ENCODE measurements at regions of chr6 and their contacts with region 1.

Region 1: GRCh38 chr6:111764238-111765175 is 108.7 kb downstream of the FYN start:
- DNase-seq: peak; percentile 29 to 86 (median 65)
- H3K4me3 ChIP-seq: peak overlapping the region; percentile 9
- H3K4me3 Mint-ChIP-seq: peak overlapping the region; percentile 70 to 87 (median 80)
- H3K27ac ChIP-seq: peak overlapping the region; percentile 58
- H3K27ac Mint-ChIP-seq: peak overlapping the region; percentile 95 to 100 (median 100)
- H3K4me1 ChIP-seq: peaks cover 97% of the 10 kb centered on the region
- H3K4me1 Mint-ChIP-seq: peaks cover 97 to 100% (median 100%) of the 10 kb centered on the region in 3 donors
- H3K27me3 ChIP-seq: no peaks in the 10 kb centered on the region
- H3K27me3 Mint-ChIP-seq: peaks cover 0 to 3% of the 10 kb centered on the region in 2 donors

Region 2: GRCh38 chr6:111445861-111446267 is 318.6 kb before region 1 on chr6:
- CTCF ChIA-PET with region 1: no interaction called
- POLR2A ChIA-PET with region 1: no interaction called
- DNase-seq: no peak
- H3K4me3 ChIP-seq: no peak overlapping the region
- H3K4me3 Mint-ChIP-seq: no peak overlapping the region
- H3K27ac ChIP-seq: no peak overlapping the region
- H3K27ac Mint-ChIP-seq: peak overlapping the region in 1 of 8 donors; percentile 12
- H3K4me1 ChIP-seq: no peaks in the 10 kb centered on the region
- H3K4me1 Mint-ChIP-seq: peaks cover 23 to 55% (median 48%) of the 10 kb centered on the region in 3 donors
- H3K27me3 ChIP-seq: no peaks in the 10 kb centered on the region
- H3K27me3 Mint-ChIP-seq: peaks cover 0 to 1% of the 10 kb centered on the region in 2 donors

Region 3: DNA sequence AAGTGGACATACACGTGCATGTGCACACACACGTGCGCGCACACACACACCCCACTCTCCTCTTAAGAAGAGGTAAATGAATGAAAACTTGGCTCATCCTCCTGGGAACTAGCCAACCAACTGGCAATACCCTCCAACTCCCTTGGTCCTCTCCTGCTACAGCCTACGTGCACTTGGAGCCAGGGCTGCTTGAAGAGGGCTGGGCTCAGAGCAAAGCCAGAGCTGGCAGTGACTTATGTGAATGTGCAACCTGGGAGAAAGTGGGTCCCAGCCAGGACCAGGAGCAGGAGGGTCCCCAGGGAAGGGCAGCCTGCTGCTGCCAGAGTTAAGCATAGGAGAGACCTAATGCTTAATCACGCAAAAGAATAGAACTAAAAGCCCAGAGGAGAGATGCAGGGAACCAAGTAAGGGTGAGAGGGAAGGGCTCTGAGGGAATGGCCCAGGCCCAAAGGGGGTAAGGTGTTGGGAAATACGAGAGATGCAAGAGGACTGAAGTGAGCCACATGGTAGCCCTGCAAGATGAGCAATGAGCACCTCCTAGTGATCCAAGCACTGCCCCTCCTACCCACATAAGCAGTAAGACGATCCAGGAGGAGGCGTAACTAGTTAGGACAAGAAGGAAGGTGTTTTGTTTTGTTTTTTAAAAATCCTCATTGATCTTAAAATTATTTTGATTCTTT is 183.5 kb before region 1 on chr6:
- CTCF ChIA-PET with region 1: no interaction called
- POLR2A ChIA-PET with region 1: no interaction called
- DNase-seq: no peak
- H3K4me3 ChIP-seq: no peak overlapping the region
- H3K4me3 Mint-ChIP-seq: no peak overlapping the region
- H3K27ac ChIP-seq: no peak overlapping the region
- H3K27ac Mint-ChIP-seq: peak overlapping the region in 2 of 8 donors; percentile 19 to 94
- H3K4me1 ChIP-seq: no peaks in the 10 kb centered on the region
- H3K4me1 Mint-ChIP-seq: peaks cover 12 to 29% (median 24%) of the 10 kb centered on the region in 3 donors
- H3K27me3 ChIP-seq: no peaks in the 10 kb centered on the region
- H3K27me3 Mint-ChIP-seq: no peaks in the 10 kb centered on the region

Region 4: DNA sequence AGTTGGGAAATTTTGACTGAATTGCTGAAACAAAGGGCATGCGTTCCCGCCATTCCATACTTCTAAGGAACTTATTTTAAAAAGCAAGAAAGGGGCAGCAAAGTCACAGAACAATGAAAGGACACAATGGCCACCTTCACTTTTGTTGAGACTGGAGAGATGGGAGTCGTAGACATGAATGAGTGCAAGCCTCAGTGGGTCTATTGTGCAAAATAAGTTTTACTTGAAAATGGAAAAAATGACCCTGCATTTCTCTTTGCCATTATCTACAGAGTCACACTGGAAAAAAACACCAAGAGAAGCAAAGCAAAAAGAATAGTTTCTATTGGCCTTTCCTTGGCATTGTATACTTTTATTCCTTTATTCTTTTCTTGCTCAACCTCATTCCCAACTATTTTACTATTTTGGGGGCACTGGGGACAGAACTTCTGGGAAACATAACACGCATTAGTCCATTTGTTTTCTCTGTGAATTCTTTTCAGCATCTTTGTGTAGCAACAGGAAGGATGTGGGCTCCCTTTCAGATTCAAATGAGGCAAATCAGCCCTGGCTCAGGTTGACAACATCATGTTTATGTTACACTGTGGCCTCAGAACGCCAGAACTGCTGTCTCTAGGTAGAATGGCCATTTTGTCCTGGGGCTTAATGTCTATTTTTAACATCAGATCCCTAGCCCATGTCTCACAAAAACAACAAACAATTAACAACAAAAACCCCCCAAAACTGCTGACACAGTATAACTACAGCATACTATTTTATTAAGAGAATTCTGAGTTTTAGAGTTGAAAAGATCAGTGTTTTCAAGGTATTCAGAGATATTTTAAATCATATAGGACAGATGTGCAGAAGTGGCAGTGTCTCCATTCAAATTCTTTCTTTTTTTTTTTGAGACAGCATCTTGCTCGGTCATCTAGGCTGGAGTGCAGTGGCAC is 13.5 kb before region 1 on chr6:
- CTCF ChIA-PET with region 1: interaction called, 19 read pairs
- POLR2A ChIA-PET with region 1: interaction called, 23 read pairs
- DNase-seq: peak; percentile 44 to 82 (median 81)
- H3K4me3 ChIP-seq: peak overlapping the region; percentile 31
- H3K4me3 Mint-ChIP-seq: peak overlapping the region; percentile 57 to 81 (median 76)
- H3K27ac ChIP-seq: peak overlapping the region; percentile 68
- H3K27ac Mint-ChIP-seq: peak overlapping the region; percentile 97 to 100 (median 100)
- H3K4me1 ChIP-seq: peaks cover 98% of the 10 kb centered on the region
- H3K4me1 Mint-ChIP-seq: peaks cover 94 to 100% (median 99%) of the 10 kb centered on the region in 3 donors
- H3K27me3 ChIP-seq: no peaks in the 10 kb centered on the region
- H3K27me3 Mint-ChIP-seq: no peaks in the 10 kb centered on the region

Region 5: DNA sequence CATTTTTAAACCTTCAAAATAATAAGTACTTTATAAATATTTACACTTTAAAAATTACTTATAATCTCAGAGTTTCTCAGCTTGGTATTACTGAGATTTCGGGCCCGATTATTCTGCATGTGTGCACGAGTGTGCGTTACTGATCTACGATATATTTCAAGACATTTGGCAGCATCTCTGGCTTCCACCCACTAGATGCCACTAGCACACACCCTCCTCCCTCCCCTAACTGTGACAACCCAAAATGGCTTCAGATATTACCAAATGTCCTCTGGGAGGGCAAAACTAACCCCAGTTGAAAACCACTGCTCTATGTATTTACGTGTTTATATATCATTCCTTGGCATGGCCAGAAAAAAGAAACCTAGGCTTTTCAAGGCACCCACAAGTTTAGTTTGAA is 12.8 kb after region 1 on chr6:
- CTCF ChIA-PET with region 1: interaction called, 30 read pairs
- POLR2A ChIA-PET with region 1: interaction called, 10 read pairs
- DNase-seq: peak in 3 of 5 donors; percentile 15 to 67 (median 48)
- H3K4me3 ChIP-seq: no peak overlapping the region
- H3K4me3 Mint-ChIP-seq: peak overlapping the region; percentile 10 to 81 (median 63)
- H3K27ac ChIP-seq: no peak overlapping the region
- H3K27ac Mint-ChIP-seq: peak overlapping the region; percentile 75 to 99 (median 86)
- H3K4me1 ChIP-seq: peaks cover 87% of the 10 kb centered on the region
- H3K4me1 Mint-ChIP-seq: peaks cover 87 to 96% (median 96%) of the 10 kb centered on the region in 3 donors
- H3K27me3 ChIP-seq: no peaks in the 10 kb centered on the region
- H3K27me3 Mint-ChIP-seq: no peaks in the 10 kb centered on the region

Region 6: GRCh38 chr6:111804627-111805235 is 40.2 kb after region 1 on chr6:
- CTCF ChIA-PET with region 1: interaction called, 10 read pairs
- POLR2A ChIA-PET with region 1: no interaction called
- DNase-seq: peak; percentile 59 to 88 (median 63)
- H3K4me3 ChIP-seq: no peak overlapping the region
- H3K4me3 Mint-ChIP-seq: peak overlapping the region; percentile 32 to 79 (median 66)
- H3K27ac ChIP-seq: peak overlapping the region; percentile 49
- H3K27ac Mint-ChIP-seq: peak overlapping the region; percentile 91 to 99 (median 96)
- H3K4me1 ChIP-seq: peaks cover 70% of the 10 kb centered on the region
- H3K4me1 Mint-ChIP-seq: peaks cover 85 to 99% (median 93%) of the 10 kb centered on the region in 3 donors
- H3K27me3 ChIP-seq: no peaks in the 10 kb centered on the region
- H3K27me3 Mint-ChIP-seq: peaks cover 0 to 2% of the 10 kb centered on the region in 2 donors

Region 7: GRCh38 chr6:111873178-111874024 is 108.9 kb after region 1 on chr6 and contains the start of gene FYN:
- CTCF ChIA-PET with region 1: interaction called, 6 read pairs
- POLR2A ChIA-PET with region 1: interaction called, 10 read pairs
- DNase-seq: peak; percentile 97 to 99 (median 98)
- H3K4me3 ChIP-seq: peak within 1 kb of the TSS; percentile 88
- H3K4me3 Mint-ChIP-seq: peak within 1 kb of the TSS; percentile 94 to 99 (median 98)
- H3K27ac ChIP-seq: peak within 1 kb of the TSS; percentile 85
- H3K27ac Mint-ChIP-seq: peak within 1 kb of the TSS; percentile 89 to 99 (median 97)
- H3K4me1 ChIP-seq: peaks cover 35% of the 10 kb centered on the region
- H3K4me1 Mint-ChIP-seq: peaks cover 39 to 45% (median 43%) of the 10 kb centered on the region in 3 donors
- H3K27me3 ChIP-seq: no peaks in the 10 kb centered on the region
- H3K27me3 Mint-ChIP-seq: no peaks in the 10 kb centered on the region
- total RNA-seq, gene FYN: 481 to 491 TPM